ENCODE measurements at regions of chr17 and their contacts with region 1.

Region 1: GRCh38 chr17:80082403-80083135 is 18.8 kb upstream of the GAA start:
- DNase-seq: peak; percentile 75
- ATAC-seq: peak; percentile 90
- H3K4me3 ChIP-seq: peak overlapping the region; percentile 2 to 43
- H3K27ac ChIP-seq: no peak overlapping the region
- H3K4me1 ChIP-seq: peaks cover 0 to 13% of the 10 kb centered on the region in 2 experiments; a peak in 2 of 4 replicates
- H3K27me3 ChIP-seq: no peaks in the 10 kb centered on the region
- CTCF ChIP-seq: peak; percentile 78 to 93 (median 85)
- POLR2A ChIP-seq: no peak
- RAD21 ChIP-seq: peak; percentile 86

Region 2: DNA sequence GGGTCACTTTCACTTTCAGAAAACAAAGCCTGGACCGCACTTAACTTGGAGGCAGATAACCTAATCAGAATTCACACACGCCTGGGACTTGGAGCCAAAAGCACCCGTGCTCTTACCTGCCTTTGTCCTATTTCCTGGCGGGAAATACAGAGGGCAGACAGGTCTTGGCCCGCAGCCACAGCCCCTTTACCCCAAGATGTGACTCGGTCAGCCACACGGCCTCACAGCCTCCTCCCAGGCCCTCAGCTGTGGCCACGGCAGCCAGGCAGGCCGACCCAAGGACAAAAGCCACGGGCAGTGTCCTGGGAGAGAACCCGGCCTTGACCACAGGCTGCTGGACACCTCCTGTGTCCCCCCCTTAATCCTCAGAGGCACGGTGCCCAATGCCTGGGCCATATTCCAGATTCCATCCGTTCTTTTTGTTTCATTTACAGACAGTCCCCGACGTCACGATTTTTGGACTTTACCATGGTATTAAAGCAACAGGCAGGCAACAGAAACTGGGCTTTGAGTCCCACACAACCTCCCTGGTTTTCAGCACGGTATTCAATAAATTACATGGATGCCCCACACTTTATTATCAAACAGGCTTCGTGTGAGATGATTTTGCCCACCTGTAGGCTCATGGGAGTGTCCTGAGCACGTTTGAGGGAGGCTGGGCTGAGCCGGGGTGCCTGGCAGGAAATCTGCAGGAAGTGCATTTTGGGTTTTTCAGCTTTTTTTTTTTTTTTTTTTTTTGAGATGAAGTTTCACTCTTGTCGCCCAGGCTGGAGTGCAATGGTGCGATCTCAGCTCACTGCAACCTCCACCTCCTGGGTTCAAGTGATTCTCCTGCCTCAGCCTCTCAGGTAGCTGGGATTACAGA is 11.2 kb before region 1 on chr17:
- CTCF ChIA-PET with region 1: no interaction called
- POLR2A ChIA-PET with region 1: no interaction called
- RAD21 ChIA-PET with region 1: no interaction called
- intact Hi-C with region 1: no loop called
- DNase-seq: no peak
- ATAC-seq: no peak
- H3K4me3 ChIP-seq: no peak overlapping the region
- H3K27ac ChIP-seq: no peak overlapping the region
- H3K4me1 ChIP-seq: no peaks in the 10 kb centered on the region; a peak in 1 of 4 replicates
- H3K27me3 ChIP-seq: no peaks in the 10 kb centered on the region
- CTCF ChIP-seq: no peak
- POLR2A ChIP-seq: no peak
- RAD21 ChIP-seq: no peak

Region 3: GRCh38 chr17:80124351-80124981 is 41.9 kb after region 1 on chr17:
- CTCF ChIA-PET with region 1: interaction called, 11 read pairs
- POLR2A ChIA-PET with region 1: no interaction called
- RAD21 ChIA-PET with region 1: interaction called in 1 of 2 experiments, 7 read pairs
- intact Hi-C with region 1: loop called (anchors 2 kb)
- DNase-seq: peak; percentile 29
- ATAC-seq: peak; percentile 92
- H3K4me3 ChIP-seq: no peak overlapping the region
- H3K27ac ChIP-seq: no peak overlapping the region
- H3K4me1 ChIP-seq: peaks cover 0 to 13% of the 10 kb centered on the region in 2 experiments; a peak in 1 of 4 replicates
- H3K27me3 ChIP-seq: 0 out of 2 replicates have a peak, but pooled peaks cover 6% of the 10 kb centered on the region
- CTCF ChIP-seq: peak; percentile 57 to 75 (median 69); a peak in 5 of 6 replicates
- POLR2A ChIP-seq: no peak
- RAD21 ChIP-seq: peak; percentile 50

Region 4: GRCh38 chr17:80252607-80253289 is 170.2 kb after region 1 on chr17:
- CTCF ChIA-PET with region 1: no interaction called
- POLR2A ChIA-PET with region 1: no interaction called
- RAD21 ChIA-PET with region 1: no interaction called
- intact Hi-C with region 1: loop called (anchors 1 kb)
- DNase-seq: peak; percentile 46
- ATAC-seq: peak; percentile 90
- H3K4me3 ChIP-seq: no peak overlapping the region
- H3K27ac ChIP-seq: peak overlapping the region; percentile 3; the same call in 1 of the 2 replicates
- H3K4me1 ChIP-seq: peaks cover 31 to 49% of the 10 kb centered on the region in 2 experiments
- H3K27me3 ChIP-seq: no peaks in the 10 kb centered on the region
- CTCF ChIP-seq: peak; percentile 81 to 94 (median 91)
- POLR2A ChIP-seq: no peak
- RAD21 ChIP-seq: peak; percentile 92

Region 5: DNA sequence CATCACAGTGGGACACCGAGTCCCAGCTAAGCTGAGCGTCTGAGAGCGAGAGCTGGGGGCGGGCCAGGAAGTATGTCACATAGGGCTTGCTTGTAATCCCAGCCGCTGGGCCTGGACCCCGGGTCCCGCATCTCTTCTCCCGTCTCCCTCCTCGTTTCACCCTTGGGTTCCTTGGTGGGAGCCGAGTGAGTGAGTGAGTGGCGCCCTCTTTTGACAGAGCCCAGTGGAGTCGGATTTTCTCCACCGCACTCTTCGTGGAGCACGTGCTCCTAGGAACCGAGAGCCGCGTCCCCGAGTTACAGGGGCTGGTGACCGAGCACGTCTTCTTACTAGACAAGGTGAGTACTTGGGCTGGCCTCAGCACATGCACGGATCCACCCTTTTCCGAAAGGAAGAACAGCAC is 281.6 kb after region 1 on chr17:
- CTCF ChIA-PET with region 1: no interaction called
- POLR2A ChIA-PET with region 1: no interaction called
- RAD21 ChIA-PET with region 1: no interaction called
- intact Hi-C with region 1: loop called (anchors 2 kb)
- DNase-seq: peak; percentile 8
- ATAC-seq: peak; percentile 86
- H3K4me3 ChIP-seq: no peak overlapping the region
- H3K27ac ChIP-seq: no peak overlapping the region
- H3K4me1 ChIP-seq: no peaks in the 10 kb centered on the region
- H3K27me3 ChIP-seq: no peaks in the 10 kb centered on the region
- CTCF ChIP-seq: peak; percentile 59 to 77 (median 74); a peak in 5 of 6 replicates
- POLR2A ChIP-seq: no peak
- RAD21 ChIP-seq: peak; percentile 81

Measured in HCT116 (cell line).